Activated CD4-positive, alpha-beta T cell treated with anti-CD3 and anti-CD28 coated beads for 36 hours (primary cell): ENCODE measurements at regions of chr17 and their contacts with region 1.

Region 1: GRCh38 chr17:35969558-35970380 is 11.5 kb downstream of the CCL16 start:
- DNase-seq: peak; percentile 86
- ATAC-seq: peak; percentile 79
- H3K4me3 Mint-ChIP-seq: no peak overlapping the region
- H3K27ac Mint-ChIP-seq: no peak overlapping the region
- H3K4me1 Mint-ChIP-seq: no peaks in the 10 kb centered on the region
- H3K27me3 Mint-ChIP-seq: no peaks in the 10 kb centered on the region

Region 2: DNA sequence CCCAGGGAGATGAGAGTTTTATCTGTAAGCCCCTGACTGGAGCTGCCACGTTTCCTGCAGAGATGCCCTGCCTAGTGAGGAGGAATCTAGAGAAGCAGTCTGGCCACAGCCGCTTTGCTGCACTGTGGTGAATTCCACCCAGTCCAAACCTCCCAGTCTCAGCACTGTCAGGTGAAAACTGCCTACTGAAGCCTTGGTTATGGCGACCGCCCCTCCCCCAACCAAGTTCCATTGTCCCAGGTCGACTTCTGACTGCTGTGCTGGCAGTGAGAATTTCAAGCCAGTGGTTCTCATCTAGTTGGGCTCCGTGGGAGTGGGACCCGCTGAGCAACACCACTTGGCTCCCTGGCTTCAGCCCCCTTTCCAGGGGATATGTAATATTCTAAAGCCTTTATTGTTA is 16.0 kb before region 1 on chr17:
- CTCF ChIA-PET with region 1: interaction called, 11 read pairs
- POLR2A ChIA-PET with region 1: no interaction called
- intact Hi-C with region 1: no loop called
- DNase-seq: no peak
- ATAC-seq: no peak
- H3K4me3 Mint-ChIP-seq: no peak overlapping the region
- H3K27ac Mint-ChIP-seq: no peak overlapping the region
- H3K4me1 Mint-ChIP-seq: no peaks in the 10 kb centered on the region
- H3K27me3 Mint-ChIP-seq: peaks cover 11% of the 10 kb centered on the region

Region 3: DNA sequence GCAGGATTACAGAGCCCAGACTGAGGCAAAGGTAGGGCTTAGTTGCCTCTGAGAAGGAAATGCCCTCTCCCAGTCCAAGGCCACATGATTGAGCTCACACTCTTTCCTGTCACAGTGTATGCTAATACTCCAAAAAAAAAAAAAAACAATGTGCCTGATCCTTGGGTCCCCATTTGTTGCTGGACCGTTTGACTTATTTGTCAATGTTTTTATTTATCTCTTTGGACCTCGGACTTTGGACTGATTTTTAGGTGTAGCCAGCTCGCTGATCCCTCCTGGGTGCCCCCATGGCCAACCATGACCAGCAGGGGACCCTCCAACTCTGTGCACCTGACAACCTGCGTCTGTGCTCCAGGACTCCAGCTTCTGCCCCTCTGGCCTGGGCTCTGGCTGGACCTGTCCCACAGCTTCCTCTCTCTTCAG is 12.2 kb after region 1 on chr17:
- CTCF ChIA-PET with region 1: interaction called, 12 read pairs
- POLR2A ChIA-PET with region 1: no interaction called
- intact Hi-C with region 1: no loop called
- DNase-seq: peak; percentile 17
- ATAC-seq: no peak
- H3K4me3 Mint-ChIP-seq: no peak overlapping the region
- H3K27ac Mint-ChIP-seq: no peak overlapping the region
- H3K4me1 Mint-ChIP-seq: no peaks in the 10 kb centered on the region
- H3K27me3 Mint-ChIP-seq: peaks cover 8% of the 10 kb centered on the region

Region 4: DNA sequence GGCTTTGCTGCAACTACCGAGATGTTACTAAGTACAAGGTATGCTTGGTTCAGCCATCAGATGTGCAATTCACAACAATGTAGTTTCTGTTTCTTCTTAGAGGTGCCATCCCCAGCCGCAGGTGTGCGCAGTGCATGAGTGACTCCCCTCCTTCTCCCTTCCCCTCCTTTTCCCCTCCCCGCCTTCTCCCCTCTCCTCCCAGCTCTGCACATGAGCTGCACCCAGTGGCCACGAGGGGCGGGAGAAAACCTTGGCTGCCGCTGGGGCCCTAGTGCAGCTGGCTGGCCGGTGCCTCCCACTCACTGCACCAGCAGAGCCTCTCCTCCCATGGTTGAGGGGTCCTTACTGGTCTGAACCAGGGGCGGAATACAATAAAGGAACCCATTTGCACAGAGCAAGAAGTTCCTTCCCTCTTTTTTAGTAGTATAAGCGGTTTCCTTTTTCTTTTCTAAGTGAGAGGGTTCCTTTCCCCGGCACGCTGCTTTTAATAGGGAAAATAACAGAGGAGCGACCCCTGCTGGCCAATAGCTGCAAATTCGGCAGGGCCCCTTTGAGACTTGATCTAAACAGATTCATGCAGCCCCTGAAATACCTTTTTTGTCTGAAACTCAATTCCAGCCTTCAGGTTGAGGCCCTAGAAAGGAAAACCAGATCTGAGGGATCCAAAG is 39.4 kb after region 1 on chr17:
- CTCF ChIA-PET with region 1: interaction called, 10 read pairs
- POLR2A ChIA-PET with region 1: no interaction called
- intact Hi-C with region 1: no loop called
- DNase-seq: peak; percentile 24
- ATAC-seq: no peak
- H3K4me3 Mint-ChIP-seq: no peak overlapping the region
- H3K27ac Mint-ChIP-seq: no peak overlapping the region
- H3K4me1 Mint-ChIP-seq: peaks cover 3% of the 10 kb centered on the region
- H3K27me3 Mint-ChIP-seq: peaks cover 4% of the 10 kb centered on the region